ENCODE measurements at regions of chr3 and their contacts with region 1.

Region 1: DNA sequence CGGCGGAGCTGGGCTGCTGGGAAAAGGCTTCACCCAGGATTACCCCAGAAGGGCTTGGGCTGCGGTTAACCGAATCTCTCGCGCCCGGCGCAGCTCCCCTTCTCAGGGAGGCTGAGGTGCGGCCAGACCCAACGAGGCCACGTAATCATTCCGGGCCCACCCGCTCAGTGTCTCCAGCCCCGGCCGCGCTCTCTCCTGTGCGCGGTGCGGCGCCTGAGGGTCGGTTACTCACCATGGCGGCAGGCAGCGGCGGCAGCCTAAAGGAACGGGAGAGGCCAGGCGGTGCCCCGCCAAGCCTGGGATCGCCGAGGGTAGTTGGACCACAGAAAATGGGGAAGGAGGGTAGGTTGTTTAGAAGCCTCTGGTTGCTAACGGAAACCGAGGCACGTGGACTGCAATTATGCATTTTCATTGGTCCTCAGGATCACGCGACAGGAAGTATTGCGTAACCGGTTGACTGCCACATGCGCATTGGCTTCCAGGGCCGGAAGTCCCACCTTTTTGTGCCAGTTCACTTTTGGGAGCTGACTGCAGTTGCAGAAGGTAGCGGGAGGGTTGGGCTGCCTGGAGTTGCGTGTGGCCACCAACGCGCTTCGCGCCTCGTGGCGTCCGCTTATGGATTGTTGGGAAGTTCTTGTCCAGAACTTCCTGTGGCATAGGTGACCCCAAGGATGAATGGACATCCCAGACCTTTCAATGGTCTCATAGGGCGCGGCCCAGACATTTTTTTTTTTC is at the start of gene LZTFL1:
- DNase-seq: peak; percentile 98
- ATAC-seq: peak; percentile 95
- H3K4me3 ChIP-seq: peak within 1 kb of the TSS; percentile 63
- H3K27ac ChIP-seq: peak within 1 kb of the TSS; percentile 16; the same call in 1 of the 2 replicates
- H3K4me1 ChIP-seq: 0 out of 2 replicates have a peak, but pooled peaks cover 2% of the 10 kb centered on the region
- H3K27me3 ChIP-seq: peaks cover 4% of the 10 kb centered on the region
- CTCF ChIP-seq: no peak
- POLR2A ChIP-seq: peak; percentile 58; the same call in 1 of the 2 replicates
- RAD21 ChIP-seq: no peak
- total RNA-seq, gene LZTFL1: 10.4 and 11.4 TPM in 2 replicates

Region 2: GRCh38 chr3:45878124-45878523 is 36.2 kb after region 1 on chr3:
- CTCF ChIA-PET with region 1: no interaction called
- POLR2A ChIA-PET with region 1: no interaction called
- dilution Hi-C with region 1: no loop called
- in situ Hi-C with region 1: no loop called
- intact Hi-C with region 1: no loop called
- DNase-seq: no peak
- ATAC-seq: no peak
- H3K4me3 ChIP-seq: no peak overlapping the region
- H3K27ac ChIP-seq: no peak overlapping the region
- H3K4me1 ChIP-seq: no peaks in the 10 kb centered on the region; the same call in 1 of the 2 replicates
- H3K27me3 ChIP-seq: peaks cover 36% of the 10 kb centered on the region
- CTCF ChIP-seq: no peak
- POLR2A ChIP-seq: no peak
- RAD21 ChIP-seq: no peak

Region 3: GRCh38 chr3:45890405-45890804 is 48.5 kb after region 1 on chr3:
- CTCF ChIA-PET with region 1: no interaction called
- POLR2A ChIA-PET with region 1: no interaction called
- dilution Hi-C with region 1: no loop called
- in situ Hi-C with region 1: no loop called
- intact Hi-C with region 1: loop called (anchors 5 kb)
- DNase-seq: no peak
- ATAC-seq: no peak
- H3K4me3 ChIP-seq: no peak overlapping the region
- H3K27ac ChIP-seq: no peak overlapping the region
- H3K4me1 ChIP-seq: no peaks in the 10 kb centered on the region; the same call in 1 of the 2 replicates
- H3K27me3 ChIP-seq: peaks cover 17% of the 10 kb centered on the region
- CTCF ChIP-seq: no peak
- POLR2A ChIP-seq: no peak
- RAD21 ChIP-seq: no peak

Region 4: GRCh38 chr3:45923755-45924154 is 81.8 kb after region 1 on chr3:
- CTCF ChIA-PET with region 1: no interaction called
- POLR2A ChIA-PET with region 1: no interaction called
- dilution Hi-C with region 1: no loop called
- in situ Hi-C with region 1: no loop called
- intact Hi-C with region 1: no loop called
- DNase-seq: peak; percentile 81
- ATAC-seq: peak; percentile 37
- H3K4me3 ChIP-seq: no peak overlapping the region
- H3K27ac ChIP-seq: no peak overlapping the region
- H3K4me1 ChIP-seq: peaks cover 12% of the 10 kb centered on the region
- H3K27me3 ChIP-seq: no peaks in the 10 kb centered on the region
- CTCF ChIP-seq: no peak
- POLR2A ChIP-seq: no peak
- RAD21 ChIP-seq: no peak